HEK293T (cell line): ENCODE measurements at regions of chr2 and their contacts with region 1.

Region 1: GRCh38 chr2:64653349-64654062 is at the start of gene SERTAD2:
- DNase-seq: peak; percentile 87

Region 2: GRCh38 chr2:64665611-64666108 is 12.2 kb after region 1 on chr2:
- CTCF ChIA-PET with region 1: no interaction called
- POLR2A ChIA-PET with region 1: interaction called, 16 read pairs
- DNase-seq: no peak

Region 3: DNA sequence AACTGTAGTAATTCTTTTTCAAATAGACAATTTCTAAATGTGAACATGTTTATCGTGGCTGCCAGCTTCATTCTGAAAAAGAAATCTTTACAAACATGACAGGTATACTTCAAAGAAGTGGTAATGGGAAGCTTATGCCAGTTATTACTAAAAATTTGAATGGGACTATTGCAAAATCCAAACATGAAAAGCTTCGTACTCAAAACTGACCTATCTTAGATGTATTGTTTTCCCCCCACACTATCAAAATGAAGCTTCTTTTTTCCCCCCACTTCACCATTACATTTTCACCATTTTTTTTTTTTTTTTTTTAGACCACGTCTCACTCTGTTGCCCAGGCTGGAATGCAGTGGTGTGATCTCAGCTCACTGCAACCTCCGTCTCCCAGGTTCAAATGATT is 50.7 kb after region 1 on chr2:
- CTCF ChIA-PET with region 1: no interaction called
- POLR2A ChIA-PET with region 1: interaction called, 15 read pairs
- DNase-seq: no peak

Region 4: GRCh38 chr2:64742678-64743077 is 89.2 kb after region 1 on chr2:
- CTCF ChIA-PET with region 1: interaction called, 3 read pairs
- POLR2A ChIA-PET with region 1: interaction called, 12 read pairs
- DNase-seq: no peak

Region 5: DNA sequence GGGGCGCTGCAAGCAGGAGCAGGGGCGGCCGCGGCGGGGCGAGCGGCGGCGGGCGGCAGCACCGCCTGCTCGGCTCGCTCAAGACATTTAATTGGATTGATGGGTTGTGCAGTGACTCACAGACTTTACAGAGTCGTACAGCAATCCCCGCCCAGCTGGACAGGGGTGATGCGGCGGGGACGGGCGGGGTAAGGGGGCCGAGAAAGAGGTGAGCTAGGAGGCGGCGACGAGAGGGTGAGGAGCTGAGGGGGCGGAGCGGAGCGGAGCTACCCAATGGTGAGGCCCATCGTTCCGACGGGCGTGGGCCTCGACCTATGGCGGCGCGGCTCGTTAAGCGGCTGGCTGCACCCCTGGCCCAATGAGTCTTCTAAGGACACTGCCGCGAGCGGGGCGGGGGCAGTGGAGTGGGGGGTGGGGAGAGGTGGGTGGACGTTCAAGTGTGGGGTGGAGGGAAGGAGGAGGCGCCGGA is 97.3 kb after region 1 on chr2:
- CTCF ChIA-PET with region 1: interaction called, 8 read pairs
- POLR2A ChIA-PET with region 1: interaction called, 59 read pairs
- DNase-seq: peak; percentile 93

Region 6: DNA sequence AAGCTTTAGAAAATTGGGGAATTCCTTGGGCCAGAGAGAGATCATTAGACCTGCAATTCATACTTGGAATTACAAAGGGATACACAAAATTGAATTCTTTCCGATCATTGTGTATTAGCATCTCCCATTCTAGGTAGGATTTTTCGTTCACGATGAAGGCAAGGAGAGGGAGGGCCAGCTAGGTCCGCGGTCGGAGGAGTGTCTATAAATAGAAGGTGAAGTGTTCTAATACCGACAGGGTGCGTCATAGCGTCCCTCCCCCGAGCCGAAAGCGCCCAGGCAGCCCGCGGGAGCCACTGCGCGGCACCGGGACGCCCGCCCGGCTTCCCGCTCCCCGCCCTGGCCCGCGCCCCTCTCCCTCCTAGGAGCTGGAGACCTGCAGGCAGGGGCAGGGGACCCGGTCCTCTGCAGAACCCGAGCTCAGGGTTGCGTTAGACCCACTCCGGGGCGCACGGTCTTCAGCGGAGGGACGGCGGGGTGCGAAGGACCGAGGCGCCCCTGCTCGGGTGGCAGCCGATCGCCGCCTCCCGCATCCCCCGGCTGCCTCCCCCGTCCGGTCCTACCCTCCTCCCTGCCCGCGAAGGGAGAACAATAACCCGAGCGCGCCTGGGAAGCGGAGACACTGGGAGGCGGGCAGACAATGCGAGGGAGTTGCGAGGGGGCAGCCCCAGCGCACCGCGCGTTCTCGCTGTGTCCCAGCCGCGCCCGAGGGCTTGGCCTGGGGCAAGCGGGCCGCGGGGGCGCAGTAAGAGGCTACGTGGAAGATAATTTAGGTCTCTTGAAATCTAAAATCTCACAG is 114.4 kb after region 1 on chr2:
- CTCF ChIA-PET with region 1: interaction called, 3 read pairs
- POLR2A ChIA-PET with region 1: interaction called, 12 read pairs
- DNase-seq: peak; percentile 77

Region 7: GRCh38 chr2:64865073-64865830 is 211.7 kb after region 1 on chr2:
- CTCF ChIA-PET with region 1: no interaction called
- POLR2A ChIA-PET with region 1: interaction called, 11 read pairs
- DNase-seq: peak; percentile 87